Activated T-helper 2 cell treated with anti-CD3 and anti-CD28 coated beads, Interferon-gamma antibody, Interleukin-2, Interleukin-4, amounts not matched to agents 10 μg/mL and 5 μg/mL and 100 μg/mL, durations not matched to agents 14 hours and 24 hours and 36 hours (primary cell): ENCODE measurements at regions of chr18 and their contacts with region 1.

Region 1: DNA sequence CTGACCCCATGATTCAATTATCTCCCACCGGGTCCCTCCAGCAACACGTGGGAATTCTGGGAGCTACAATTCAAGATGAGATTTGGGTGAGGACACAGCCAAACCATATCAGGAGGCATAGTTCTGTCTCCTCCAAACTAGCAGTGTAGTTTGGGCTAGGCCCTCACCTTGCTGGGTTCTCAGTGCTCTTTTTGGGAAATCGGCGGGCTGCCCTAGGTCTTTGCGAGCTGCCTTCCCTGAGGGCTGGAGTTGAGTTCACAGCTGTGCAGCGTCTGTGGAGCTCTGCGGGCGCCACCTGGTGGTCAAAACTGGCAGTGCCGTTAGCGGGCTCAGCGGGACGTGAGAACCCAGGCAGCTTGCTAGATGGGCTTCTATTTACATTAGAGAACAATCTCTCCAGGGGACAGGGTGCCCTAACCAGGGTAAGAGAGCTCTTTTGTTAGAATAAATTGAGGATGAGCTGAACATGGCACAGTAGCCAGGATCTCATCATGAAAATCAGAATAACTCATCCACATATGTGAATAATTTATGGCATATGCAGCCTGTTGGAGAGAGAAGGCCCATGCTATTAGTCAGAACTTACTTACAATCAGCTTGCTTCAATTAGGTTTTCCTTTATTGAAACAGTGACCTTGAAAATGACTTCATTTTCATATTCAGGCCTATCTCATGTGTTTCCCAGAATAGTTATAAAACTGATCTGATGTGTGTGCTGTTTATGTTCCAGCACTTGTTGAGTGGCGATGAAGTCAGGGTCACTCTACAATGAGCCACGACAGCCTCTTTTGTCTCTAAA is 27.4 kb upstream of the YES1 start:
- DNase-seq: peak; percentile 75
- H3K4me3 Mint-ChIP-seq: no peak overlapping the region
- H3K27ac Mint-ChIP-seq: no peak overlapping the region
- H3K4me1 Mint-ChIP-seq: peaks cover 11% of the 10 kb centered on the region
- H3K27me3 Mint-ChIP-seq: peaks cover 22% of the 10 kb centered on the region

Region 2: DNA sequence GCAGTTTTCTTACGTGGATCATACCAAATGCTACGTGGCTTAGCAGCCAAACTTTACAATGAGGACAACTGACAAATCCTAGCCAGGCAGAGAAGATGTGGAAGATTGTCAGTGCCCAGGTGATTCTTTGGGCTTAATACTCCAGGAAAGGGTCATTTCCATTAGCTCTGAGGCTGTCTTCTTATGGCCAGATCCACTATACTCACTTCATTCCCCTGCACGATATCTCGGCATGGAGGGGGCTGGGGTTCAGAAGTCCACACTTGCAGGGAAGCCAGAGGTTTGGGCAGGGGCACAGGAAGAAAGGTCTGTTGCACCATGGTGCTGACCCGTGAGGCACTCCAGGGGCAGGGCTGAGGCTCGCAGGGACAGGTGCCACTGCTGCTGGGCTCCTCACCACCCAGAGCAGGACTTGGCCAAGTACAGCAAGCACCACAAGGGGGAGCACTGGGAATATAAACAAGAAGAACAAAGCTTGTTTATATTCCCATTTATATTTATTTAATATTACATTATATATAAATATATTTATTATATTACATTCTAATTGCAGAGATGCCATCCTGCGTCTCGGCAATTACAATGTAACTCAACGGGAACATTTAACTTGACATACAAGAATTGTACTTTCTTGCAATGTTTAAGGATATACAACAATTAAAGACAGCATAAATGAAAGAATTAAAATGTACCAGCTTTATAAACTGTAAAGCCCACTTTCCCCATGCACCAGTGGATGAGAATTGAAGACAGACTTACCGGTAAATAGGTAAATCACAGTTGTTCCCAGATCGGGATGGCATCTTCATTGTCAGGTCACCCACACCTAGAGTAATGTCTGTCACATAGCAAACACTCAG is 215.4 kb before region 1 on chr18:
- intact Hi-C with region 1: loop called (anchors 1 kb)
- DNase-seq: peak; percentile 43
- H3K4me3 Mint-ChIP-seq: no peak overlapping the region
- H3K27ac Mint-ChIP-seq: no peak overlapping the region
- H3K4me1 Mint-ChIP-seq: peaks cover 2% of the 10 kb centered on the region
- H3K27me3 Mint-ChIP-seq: peaks cover 34% of the 10 kb centered on the region

Region 3: GRCh38 chr18:741931-742512 is 97.4 kb before region 1 on chr18:
- intact Hi-C with region 1: loop called (anchors 1 kb)
- DNase-seq: no peak
- H3K4me3 Mint-ChIP-seq: no peak overlapping the region
- H3K27ac Mint-ChIP-seq: no peak overlapping the region
- H3K4me1 Mint-ChIP-seq: peaks cover 5% of the 10 kb centered on the region
- H3K27me3 Mint-ChIP-seq: no peaks in the 10 kb centered on the region

Region 4: DNA sequence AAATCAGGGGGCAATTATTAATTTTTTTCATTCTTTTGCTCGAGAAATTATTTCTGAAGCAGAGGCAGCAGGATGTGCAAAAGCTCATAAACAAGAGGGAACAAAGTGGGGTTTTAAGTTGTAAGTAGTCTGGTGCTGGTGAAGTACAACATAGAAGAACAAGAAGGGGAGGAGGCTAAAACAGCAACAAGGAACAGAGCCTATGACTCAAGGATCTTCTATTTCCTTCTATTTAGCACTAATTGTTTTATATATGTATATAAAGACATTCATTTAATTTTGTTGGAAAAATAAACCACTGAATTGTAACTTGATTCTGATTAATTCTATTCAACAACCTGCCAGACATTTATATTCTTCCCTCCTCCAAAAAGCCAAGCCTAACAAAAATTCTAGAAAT is 62.4 kb before region 1 on chr18:
- intact Hi-C with region 1: no loop called
- DNase-seq: no peak
- H3K4me3 Mint-ChIP-seq: no peak overlapping the region
- H3K27ac Mint-ChIP-seq: no peak overlapping the region
- H3K4me1 Mint-ChIP-seq: peaks cover 20% of the 10 kb centered on the region
- H3K27me3 Mint-ChIP-seq: no peaks in the 10 kb centered on the region